K562 (cell line): ENCODE measurements at regions of chr4 and their contacts with region 1.

Region 1: DNA sequence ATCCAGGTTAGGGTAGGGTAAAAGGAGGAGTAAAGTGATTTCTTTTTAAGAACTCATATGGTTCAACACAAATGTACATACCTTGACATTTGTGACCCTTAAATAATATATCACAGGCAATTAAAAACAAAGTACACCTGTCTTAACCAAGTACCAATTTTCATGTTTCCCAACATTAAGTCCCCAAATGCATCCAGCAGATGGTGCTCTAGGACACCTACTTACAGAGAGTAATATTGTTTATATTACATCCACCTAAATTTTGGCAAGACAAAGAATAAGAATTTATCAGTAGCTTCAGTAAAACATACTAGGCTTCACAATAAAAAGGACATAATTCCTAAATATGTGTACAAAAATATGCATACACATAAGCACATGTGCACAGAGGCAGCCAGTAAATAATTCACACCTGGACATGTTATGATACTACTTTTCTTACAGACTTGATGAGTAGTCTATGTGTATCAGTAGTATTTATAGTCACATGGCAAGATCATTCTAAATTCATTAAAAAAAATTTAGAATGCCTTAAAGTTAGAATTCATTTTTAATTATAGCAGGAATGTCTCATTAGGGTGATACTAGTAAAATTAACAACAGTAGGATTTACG is 219.7 kb downstream of the DCLK2 start:
- DNase-seq: peak; percentile 9 to 70 (median 20)
- ATAC-seq: peak; percentile 87
- H3K4me3 ChIP-seq: no peak overlapping the region
- H3K27ac ChIP-seq: no peak overlapping the region
- H3K4me1 ChIP-seq: peaks cover 0 to 2% of the 10 kb centered on the region in 2 experiments; a peak in 1 of 5 replicates
- H3K27me3 ChIP-seq: no peaks in the 10 kb centered on the region
- CTCF ChIP-seq: peak; percentile 32 to 79 (median 53); a peak in 5 of 6 replicates
- EP300 ChIP-seq: no peak
- POLR2A ChIP-seq: no peak
- RAD21 ChIP-seq: peak; percentile 89 to 91

Region 2: DNA sequence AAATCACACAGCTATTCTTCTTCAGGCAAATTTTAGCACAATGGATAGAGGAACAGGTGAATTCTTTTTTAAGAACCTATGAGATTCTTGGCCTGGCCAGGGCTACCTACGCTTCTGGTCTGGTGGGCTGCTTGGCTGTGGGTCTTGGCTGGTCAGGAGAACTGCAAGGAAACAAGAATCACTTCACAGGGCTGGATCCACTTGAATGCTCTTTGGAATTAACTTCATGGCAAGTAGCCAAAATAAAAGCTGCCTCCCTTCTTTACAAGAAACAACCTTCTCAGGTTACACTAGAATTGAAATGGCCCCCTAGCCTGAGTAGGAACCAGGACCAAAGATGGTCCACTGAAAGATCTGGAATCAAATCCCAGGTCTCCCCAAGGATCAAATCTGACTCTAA is 1001.5 kb before region 1 on chr4:
- CTCF ChIA-PET with region 1: no interaction called
- POLR2A ChIA-PET with region 1: no interaction called
- in situ Hi-C with region 1: no loop called
- intact Hi-C with region 1: no loop called
- DNase-seq: no peak
- ATAC-seq: no peak
- H3K4me3 ChIP-seq: no peak overlapping the region
- H3K27ac ChIP-seq: no peak overlapping the region
- H3K4me1 ChIP-seq: no peaks in the 10 kb centered on the region
- H3K27me3 ChIP-seq: no peaks in the 10 kb centered on the region
- CTCF ChIP-seq: no peak
- EP300 ChIP-seq: no peak
- POLR2A ChIP-seq: no peak
- RAD21 ChIP-seq: no peak

Region 3: GRCh38 chr4:150164956-150165629 is 132.9 kb before region 1 on chr4:
- CTCF ChIA-PET with region 1: no interaction called
- POLR2A ChIA-PET with region 1: no interaction called
- in situ Hi-C with region 1: no loop called
- intact Hi-C with region 1: no loop called
- DNase-seq: no peak
- ATAC-seq: no peak
- H3K4me3 ChIP-seq: no peak overlapping the region
- H3K27ac ChIP-seq: no peak overlapping the region
- H3K4me1 ChIP-seq: no peaks in the 10 kb centered on the region
- H3K27me3 ChIP-seq: 0 out of 5 replicates have a peak, but pooled peaks cover 0 to 3% of the 10 kb centered on the region in 2 experiments
- CTCF ChIP-seq: no peak
- EP300 ChIP-seq: no peak
- POLR2A ChIP-seq: no peak
- RAD21 ChIP-seq: no peak

Region 4: DNA sequence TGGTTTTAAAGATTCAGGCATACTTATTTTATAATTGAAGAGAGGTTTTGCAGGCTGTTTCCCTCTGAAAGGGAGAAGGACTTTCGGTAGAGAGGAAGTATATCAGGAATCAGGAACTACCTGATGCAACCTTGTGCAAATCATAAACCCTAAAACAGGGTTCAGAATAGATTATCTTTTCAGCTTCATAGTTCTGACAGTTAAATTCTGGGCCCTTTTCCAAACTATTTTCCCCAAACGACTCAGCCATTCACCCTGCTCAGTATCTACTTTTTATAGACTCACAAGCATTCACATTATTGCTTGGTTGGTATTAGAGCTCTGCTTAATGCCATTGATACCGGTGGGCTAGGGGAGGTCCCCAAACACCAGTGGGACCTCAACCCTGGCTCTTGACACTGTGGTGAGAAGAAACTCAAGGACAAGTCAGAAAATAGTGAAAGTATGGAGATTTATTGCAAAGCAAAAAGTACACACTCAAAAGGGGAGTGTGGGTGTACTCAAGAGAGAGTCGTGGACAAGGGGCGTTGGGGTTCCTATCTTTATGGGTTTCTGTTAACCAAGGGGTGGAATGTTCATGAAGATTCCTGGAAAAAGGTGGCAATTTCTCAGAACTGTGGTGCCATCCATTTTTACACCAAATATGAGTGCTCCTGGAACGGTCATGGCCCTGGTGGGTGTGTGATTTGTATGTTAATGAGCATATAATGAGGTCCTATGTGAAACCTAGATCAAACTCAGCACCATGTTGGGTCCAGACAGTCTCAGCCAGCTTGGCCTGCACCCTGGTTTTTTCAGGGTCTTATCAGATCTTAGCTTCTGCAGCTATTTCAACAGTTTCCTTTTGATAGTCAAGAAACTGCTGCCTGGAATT is 18.6 kb after region 1 on chr4:
- CTCF ChIA-PET with region 1: no interaction called
- POLR2A ChIA-PET with region 1: no interaction called
- in situ Hi-C with region 1: no loop called
- intact Hi-C with region 1: loop called (anchors 2 kb)
- DNase-seq: peak in 1 of 4 experiments; percentile 66
- ATAC-seq: peak; percentile 75
- H3K4me3 ChIP-seq: no peak overlapping the region
- H3K27ac ChIP-seq: peak overlapping the region; percentile 91
- H3K4me1 ChIP-seq: peaks cover 5 to 59% of the 10 kb centered on the region in 2 experiments
- H3K27me3 ChIP-seq: no peaks in the 10 kb centered on the region
- CTCF ChIP-seq: no peak
- EP300 ChIP-seq: peak; percentile 98
- POLR2A ChIP-seq: no peak
- RAD21 ChIP-seq: peak in 1 of 2 experiments; percentile 15; a peak in 2 of 4 replicates

Region 5: DNA sequence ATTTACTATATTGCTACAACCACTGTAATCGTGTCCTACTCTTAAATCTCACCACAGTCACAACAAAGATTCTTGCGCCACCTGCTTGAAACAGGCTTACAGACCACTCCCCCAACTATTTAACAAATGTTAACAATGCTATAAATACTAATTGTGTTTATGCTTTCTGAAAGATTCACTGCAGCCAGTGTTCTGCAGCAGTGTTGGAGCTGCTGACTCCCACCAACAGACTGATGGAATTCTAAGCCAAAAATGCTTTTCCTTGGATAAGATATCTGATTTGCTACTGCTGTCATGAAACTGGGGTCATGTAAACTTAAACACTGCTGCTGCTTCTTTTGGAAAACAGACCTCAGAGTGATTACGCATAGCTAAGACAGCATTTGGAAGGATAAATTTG is 39.8 kb after region 1 on chr4:
- CTCF ChIA-PET with region 1: no interaction called
- POLR2A ChIA-PET with region 1: no interaction called
- in situ Hi-C with region 1: no loop called
- intact Hi-C with region 1: loop called (anchors 1 kb)
- DNase-seq: no peak
- ATAC-seq: peak; percentile 64
- H3K4me3 ChIP-seq: no peak overlapping the region
- H3K27ac ChIP-seq: no peak overlapping the region
- H3K4me1 ChIP-seq: peaks cover 0 to 5% of the 10 kb centered on the region in 2 experiments; a peak in 1 of 5 replicates
- H3K27me3 ChIP-seq: no peaks in the 10 kb centered on the region
- CTCF ChIP-seq: no peak; a peak in 1 of 6 replicates
- EP300 ChIP-seq: no peak
- POLR2A ChIP-seq: no peak
- RAD21 ChIP-seq: peak in 1 of 2 experiments; percentile 48; a peak in 3 of 4 replicates

Region 6: DNA sequence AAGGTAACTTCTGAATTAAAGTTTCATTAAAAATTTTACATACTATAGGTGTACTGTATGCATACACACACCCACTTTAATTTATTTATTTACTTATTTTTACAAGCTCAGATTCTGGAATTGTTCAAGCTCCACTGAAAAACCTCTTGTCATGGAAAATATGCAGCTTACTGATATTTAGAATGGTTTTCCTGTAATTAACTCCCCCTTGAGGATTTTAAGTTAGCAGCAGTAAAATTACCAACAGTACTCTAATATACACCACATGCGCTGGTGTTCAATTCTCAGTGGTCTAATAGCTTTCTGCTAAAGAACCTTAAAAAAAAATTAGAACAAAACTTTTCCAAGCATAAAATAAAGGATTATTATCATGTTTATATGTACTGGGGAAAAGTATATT is 296.0 kb after region 1 on chr4:
- CTCF ChIA-PET with region 1: interaction called, 14 read pairs
- POLR2A ChIA-PET with region 1: no interaction called
- in situ Hi-C with region 1: no loop called
- intact Hi-C with region 1: loop called (anchors 1 kb)
- DNase-seq: peak in 1 of 4 experiments; percentile 34
- ATAC-seq: peak; percentile 80
- H3K4me3 ChIP-seq: no peak overlapping the region
- H3K27ac ChIP-seq: no peak overlapping the region
- H3K4me1 ChIP-seq: no peaks in the 10 kb centered on the region
- H3K27me3 ChIP-seq: no peaks in the 10 kb centered on the region
- CTCF ChIP-seq: peak in 2 of 3 experiments; percentile 23 to 53; a peak in 2 of 6 replicates
- EP300 ChIP-seq: no peak
- POLR2A ChIP-seq: no peak
- RAD21 ChIP-seq: peak; percentile 51 to 63

Region 7: GRCh38 chr4:150769845-150770244 is 471.9 kb after region 1 on chr4:
- CTCF ChIA-PET with region 1: no interaction called
- POLR2A ChIA-PET with region 1: no interaction called
- in situ Hi-C with region 1: no loop called
- intact Hi-C with region 1: loop called (anchors 10 kb)
- DNase-seq: no peak
- ATAC-seq: no peak; the same call in 2 of the 3 replicates
- H3K4me3 ChIP-seq: no peak overlapping the region
- H3K27ac ChIP-seq: peak overlapping the region; percentile 13; the same call in 1 of the 3 replicates
- H3K4me1 ChIP-seq: peaks cover 0 to 18% of the 10 kb centered on the region in 2 experiments; a peak in 2 of 5 replicates
- H3K27me3 ChIP-seq: no peaks in the 10 kb centered on the region
- CTCF ChIP-seq: no peak
- EP300 ChIP-seq: no peak
- POLR2A ChIP-seq: no peak
- RAD21 ChIP-seq: no peak

Region 8: DNA sequence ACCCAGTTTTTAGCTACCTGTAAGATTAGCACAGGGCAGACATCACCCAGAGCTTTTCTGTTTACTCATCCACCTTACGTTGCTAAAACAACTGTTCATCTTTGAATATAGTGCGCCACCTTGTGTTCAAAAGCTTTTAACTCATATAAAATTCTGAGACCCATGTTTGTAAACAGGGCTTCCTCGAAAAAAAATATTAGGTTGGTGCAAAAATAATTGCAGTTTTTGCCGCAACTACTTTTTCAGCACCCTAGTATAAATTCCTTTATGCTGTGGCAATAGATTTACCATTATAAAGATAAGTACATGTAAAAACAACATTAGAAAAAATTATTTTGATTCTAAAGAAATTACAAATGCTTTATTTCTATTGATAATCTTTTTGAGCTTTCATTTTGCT is 569.2 kb after region 1 on chr4:
- CTCF ChIA-PET with region 1: interaction called, 27 read pairs
- POLR2A ChIA-PET with region 1: interaction called, 3 read pairs
- in situ Hi-C with region 1: loop called (anchors 10 kb)
- intact Hi-C with region 1: loop called (anchors 1 kb)
- DNase-seq: peak; percentile 44 to 86 (median 62)
- ATAC-seq: peak; percentile 93
- H3K4me3 ChIP-seq: no peak overlapping the region
- H3K27ac ChIP-seq: no peak overlapping the region
- H3K4me1 ChIP-seq: no peaks in the 10 kb centered on the region
- H3K27me3 ChIP-seq: no peaks in the 10 kb centered on the region
- CTCF ChIP-seq: peak; percentile 40 to 78 (median 50); a peak in 4 of 6 replicates
- EP300 ChIP-seq: no peak
- POLR2A ChIP-seq: no peak
- RAD21 ChIP-seq: peak; percentile 71 to 83

Region 9: DNA sequence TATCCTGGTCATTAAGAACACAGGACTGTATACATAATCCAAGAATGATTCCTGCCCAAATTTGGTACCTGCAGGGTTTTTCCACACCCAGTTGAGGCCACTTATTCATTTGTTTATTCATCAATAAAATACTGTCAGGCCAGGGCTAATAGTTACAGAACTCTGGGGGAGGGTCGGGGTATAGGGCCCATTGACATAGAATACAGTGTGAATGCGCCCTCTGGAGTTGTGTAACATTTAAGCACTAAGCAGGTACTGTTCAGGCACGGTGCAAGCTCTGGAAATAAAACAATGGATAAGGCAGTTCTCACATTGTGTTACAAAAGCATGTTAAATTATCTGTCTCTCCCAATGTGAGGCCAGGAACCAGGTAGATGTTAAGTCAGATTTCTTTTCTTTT is 747.9 kb after region 1 on chr4:
- CTCF ChIA-PET with region 1: no interaction called
- POLR2A ChIA-PET with region 1: no interaction called
- in situ Hi-C with region 1: no loop called
- intact Hi-C with region 1: loop called (anchors 5 kb)
- DNase-seq: peak; percentile 26 to 58 (median 40)
- ATAC-seq: peak; percentile 93
- H3K4me3 ChIP-seq: no peak overlapping the region
- H3K27ac ChIP-seq: no peak overlapping the region
- H3K4me1 ChIP-seq: no peaks in the 10 kb centered on the region; a peak in 1 of 5 replicates
- H3K27me3 ChIP-seq: no peaks in the 10 kb centered on the region
- CTCF ChIP-seq: peak; percentile 49 to 66 (median 55); a peak in 4 of 6 replicates
- EP300 ChIP-seq: no peak
- POLR2A ChIP-seq: no peak
- RAD21 ChIP-seq: peak in 1 of 2 experiments; percentile 66; a peak in 3 of 4 replicates